ENCODE measurements at regions of chr10 and their contacts with region 1.

Region 1: DNA sequence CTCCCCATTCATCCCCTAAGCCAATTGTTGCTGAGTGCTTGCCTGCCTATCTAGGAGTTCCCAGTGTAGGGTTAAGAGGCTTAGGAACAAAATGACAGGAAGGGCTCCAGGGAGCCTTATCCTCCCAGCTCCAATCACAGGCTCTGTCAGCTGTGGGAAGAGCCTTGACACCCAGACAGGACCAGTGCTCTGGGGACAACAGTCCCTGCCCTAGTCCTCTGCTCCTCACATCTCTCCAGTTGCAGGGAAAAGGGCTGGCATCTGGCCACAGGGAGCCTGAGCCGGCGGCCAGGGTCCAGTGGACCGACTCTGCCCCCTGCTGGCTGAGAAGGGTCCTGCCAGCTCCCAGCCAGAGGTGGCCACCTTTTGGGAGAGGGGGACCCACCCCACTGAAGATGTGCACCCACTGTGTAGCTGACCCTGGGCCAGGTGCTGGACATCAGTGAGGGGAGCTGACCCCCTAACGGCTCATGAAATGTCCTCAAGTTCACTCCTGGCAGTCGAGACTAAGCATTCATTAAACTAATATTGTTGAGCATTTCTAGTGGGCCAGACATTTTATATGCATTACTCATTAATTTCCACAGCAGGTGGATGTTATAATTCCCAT is 17.6 kb downstream of the DNAJB12 start:
- DNase-seq: peak; percentile 71
- H3K4me3 Mint-ChIP-seq: no peak overlapping the region
- H3K27ac Mint-ChIP-seq: peak overlapping the region; percentile 64
- H3K4me1 Mint-ChIP-seq: peaks cover 66% of the 10 kb centered on the region
- H3K27me3 Mint-ChIP-seq: no peaks in the 10 kb centered on the region

Region 2: GRCh38 chr10:72126184-72126871 is 210.8 kb before region 1 on chr10:
- CTCF ChIA-PET with region 1: interaction called, 63 read pairs
- POLR2A ChIA-PET with region 1: interaction called, 4 read pairs
- DNase-seq: no peak
- H3K4me3 Mint-ChIP-seq: no peak overlapping the region
- H3K27ac Mint-ChIP-seq: no peak overlapping the region
- H3K4me1 Mint-ChIP-seq: peaks cover 28% of the 10 kb centered on the region
- H3K27me3 Mint-ChIP-seq: no peaks in the 10 kb centered on the region

Region 3: DNA sequence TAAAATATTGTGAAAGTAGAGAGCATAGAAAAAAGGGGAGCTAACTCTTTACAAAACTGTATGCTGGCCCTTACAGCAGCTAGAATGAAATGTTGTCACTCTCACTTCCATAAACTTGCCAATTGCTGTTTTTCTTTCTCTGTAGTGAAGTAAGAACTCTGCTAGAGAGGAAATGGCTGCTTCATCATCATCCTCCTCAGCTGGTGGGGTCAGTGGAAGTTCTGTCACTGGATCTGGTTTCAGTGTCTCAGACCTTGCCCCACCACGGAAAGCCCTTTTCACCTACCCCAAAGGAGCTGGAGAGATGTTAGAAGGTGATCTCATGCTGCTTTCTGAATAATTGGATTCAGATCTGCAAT is 113.4 kb before region 1 on chr10:
- CTCF ChIA-PET with region 1: interaction called, 36 read pairs
- POLR2A ChIA-PET with region 1: interaction called, 6 read pairs
- DNase-seq: no peak
- H3K4me3 Mint-ChIP-seq: no peak overlapping the region
- H3K27ac Mint-ChIP-seq: peak overlapping the region; percentile 58
- H3K4me1 Mint-ChIP-seq: peaks cover 52% of the 10 kb centered on the region
- H3K27me3 Mint-ChIP-seq: no peaks in the 10 kb centered on the region

Region 4: DNA sequence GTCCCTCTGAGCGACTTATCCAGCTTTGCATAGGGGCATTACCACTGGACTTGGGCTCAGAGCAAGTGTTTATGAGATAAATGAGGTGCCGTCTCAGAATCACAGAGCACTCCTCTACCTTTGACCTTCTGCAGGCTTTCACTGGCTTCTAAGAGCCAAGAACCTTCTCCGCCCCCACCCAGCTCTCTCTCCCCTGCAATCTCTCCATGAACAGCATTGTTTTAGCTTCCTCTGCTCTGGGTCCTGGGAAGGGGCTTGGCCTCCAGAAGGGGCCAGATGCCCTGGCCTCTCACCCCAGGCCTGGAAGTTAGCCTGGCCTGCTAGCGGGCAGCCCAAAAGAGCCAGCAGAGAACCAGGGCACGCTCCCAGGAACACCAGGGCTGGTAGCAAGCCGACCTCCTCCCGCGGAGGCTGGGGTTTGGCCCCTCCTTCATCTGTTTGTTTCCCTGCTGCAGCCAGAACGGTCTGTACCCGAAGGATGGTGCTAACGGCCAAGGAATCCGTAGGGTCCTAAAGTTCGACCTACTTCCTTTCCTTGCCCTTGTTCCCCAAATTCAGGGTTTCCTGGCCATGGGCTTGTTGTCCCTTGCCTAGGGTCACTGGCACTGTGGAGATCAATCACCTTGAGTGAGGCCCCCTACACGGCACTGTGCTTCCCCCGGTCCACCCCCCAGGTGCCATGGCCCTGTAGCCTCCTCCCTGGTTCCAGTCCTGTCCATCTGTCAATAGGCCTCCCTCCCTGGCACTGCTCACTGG is 82.1 kb before region 1 on chr10:
- CTCF ChIA-PET with region 1: interaction called, 12 read pairs
- POLR2A ChIA-PET with region 1: interaction called, 48 read pairs
- DNase-seq: peak; percentile 50
- H3K4me3 Mint-ChIP-seq: peak overlapping the region; percentile 48
- H3K27ac Mint-ChIP-seq: peak overlapping the region; percentile 78
- H3K4me1 Mint-ChIP-seq: peaks cover 73% of the 10 kb centered on the region
- H3K27me3 Mint-ChIP-seq: no peaks in the 10 kb centered on the region

Region 5: GRCh38 chr10:72278668-72279393 is 58.3 kb before region 1 on chr10:
- CTCF ChIA-PET with region 1: interaction called, 89 read pairs
- POLR2A ChIA-PET with region 1: interaction called, 225 read pairs
- DNase-seq: no peak
- H3K4me3 Mint-ChIP-seq: peak overlapping the region; percentile 3
- H3K27ac Mint-ChIP-seq: no peak overlapping the region
- H3K4me1 Mint-ChIP-seq: peaks cover 47% of the 10 kb centered on the region
- H3K27me3 Mint-ChIP-seq: no peaks in the 10 kb centered on the region

Region 6: GRCh38 chr10:72354478-72355213 is 17.5 kb after region 1 on chr10 and contains the start of gene DNAJB12:
- CTCF ChIA-PET with region 1: interaction called, 18 read pairs
- POLR2A ChIA-PET with region 1: interaction called, 11 read pairs
- DNase-seq: peak; percentile 91
- H3K4me3 Mint-ChIP-seq: peak within 1 kb of the TSS; percentile 95
- H3K27ac Mint-ChIP-seq: peak within 1 kb of the TSS; percentile 91
- H3K4me1 Mint-ChIP-seq: peaks cover 33% of the 10 kb centered on the region
- H3K27me3 Mint-ChIP-seq: peaks cover 2% of the 10 kb centered on the region
- total RNA-seq, gene DNAJB12: 23.8 to 26.7 TPM

Region 7: GRCh38 chr10:72367301-72367960 is 30.3 kb after region 1 on chr10:
- CTCF ChIA-PET with region 1: no interaction called
- POLR2A ChIA-PET with region 1: no interaction called
- DNase-seq: no peak
- H3K4me3 Mint-ChIP-seq: no peak overlapping the region
- H3K27ac Mint-ChIP-seq: no peak overlapping the region
- H3K4me1 Mint-ChIP-seq: peaks cover 33% of the 10 kb centered on the region
- H3K27me3 Mint-ChIP-seq: no peaks in the 10 kb centered on the region

Measured in activated CD4-positive, alpha-beta memory T cell treated with anti-CD3 and anti-CD28 coated beads, Interleukin-2, amount 10 ng/mL, durations not matched to agents 7 days and 5 days (primary cell).